ENCODE measurements at regions of chr10 and their contacts with region 1.

Region 1: DNA sequence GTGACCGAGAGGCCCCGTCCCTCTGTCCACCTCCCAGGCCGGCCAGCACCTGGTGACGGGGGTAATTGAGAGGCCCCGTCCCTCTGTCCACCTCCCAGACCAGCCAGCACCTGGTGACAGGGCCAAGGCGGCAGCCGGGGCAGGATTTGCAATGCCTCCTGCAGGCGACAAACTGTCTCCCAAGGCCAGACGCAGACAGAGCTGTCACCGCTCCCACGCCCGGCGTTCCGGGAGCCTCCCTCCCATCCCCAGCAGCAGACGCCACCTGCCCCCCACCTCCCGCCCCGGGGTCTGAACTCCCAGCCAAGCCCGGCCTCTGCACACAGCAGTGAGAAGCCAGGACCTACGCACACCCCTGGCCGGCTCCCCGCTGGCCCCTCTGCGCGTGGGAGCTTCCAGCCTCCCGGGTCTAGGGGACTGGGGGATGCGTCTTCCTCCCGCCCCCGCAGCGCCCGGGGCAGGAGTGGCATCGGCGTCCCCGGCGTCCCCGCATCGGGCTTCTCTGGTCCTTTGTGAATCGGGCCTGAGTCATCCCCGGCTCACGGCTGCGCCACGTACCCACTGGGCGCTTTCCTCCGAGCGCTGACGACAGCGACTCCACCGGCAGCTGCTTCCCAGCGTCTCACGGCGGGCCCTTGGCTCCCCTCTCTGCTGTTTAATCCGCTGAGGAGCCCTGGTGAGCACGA is 95.1 kb upstream of the DIP2C start:
- DNase-seq: peak; percentile 46 to 67 (median 59)
- ATAC-seq: peak; percentile 27 to 78 (median 50)
- H3K4me3 ChIP-seq: peak overlapping the region in 2 of 3 donors; percentile 7 to 26
- H3K27ac ChIP-seq: no peak overlapping the region
- H3K4me1 ChIP-seq: peaks cover 0 to 8% (median 0%) of the 10 kb centered on the region in 4 donors
- H3K27me3 ChIP-seq: no peaks in the 10 kb centered on the region
- CTCF ChIP-seq: no peak
- POLR2A ChIP-seq: no peak

Region 2: DNA sequence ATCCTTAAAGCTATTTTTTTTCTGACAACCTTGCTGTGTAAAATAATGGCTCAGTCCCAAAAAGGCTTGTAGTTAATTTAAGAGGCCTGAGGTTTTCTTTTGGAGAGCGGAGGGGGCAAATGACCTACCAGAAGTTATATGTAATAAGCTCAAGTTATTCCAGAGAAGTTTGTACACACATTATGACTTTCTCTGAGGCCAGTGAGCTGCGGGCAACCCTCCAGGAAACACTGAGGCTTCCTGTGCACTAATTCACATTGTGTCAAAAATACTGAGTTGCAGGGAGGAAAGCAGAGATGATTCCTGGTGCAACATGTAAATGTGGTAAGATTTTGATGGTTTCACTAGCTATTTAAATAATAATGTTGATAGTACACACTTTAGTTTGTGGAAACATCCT is 283.7 kb before region 1 on chr10:
- intact Hi-C with region 1: loop called in 1 of 2 experiments (anchors 10 kb)
- DNase-seq: no peak
- ATAC-seq: no peak
- H3K4me3 ChIP-seq: no peak overlapping the region
- H3K27ac ChIP-seq: no peak overlapping the region
- H3K4me1 ChIP-seq: no peaks in the 10 kb centered on the region
- H3K27me3 ChIP-seq: no peaks in the 10 kb centered on the region
- CTCF ChIP-seq: no peak
- POLR2A ChIP-seq: no peak

Region 3: GRCh38 chr10:511101-511848 is 273.3 kb before region 1 on chr10:
- intact Hi-C with region 1: loop called (anchors 5 to 10 kb)
- DNase-seq: peak; percentile 92 to 93 (median 92)
- ATAC-seq: peak; percentile 96 to 98 (median 97)
- H3K4me3 ChIP-seq: no peak overlapping the region
- H3K27ac ChIP-seq: no peak overlapping the region
- H3K4me1 ChIP-seq: peaks cover 0 to 9% (median 0%) of the 10 kb centered on the region in 4 donors
- H3K27me3 ChIP-seq: no peaks in the 10 kb centered on the region
- CTCF ChIP-seq: peak; percentile 96 to 99 (median 98)
- POLR2A ChIP-seq: no peak

Measured in right lobe of liver (tissue), 6 donors.